ENCODE measurements at regions of chr7 and their contacts with region 1.

Region 1: GRCh38 chr7:122902751-122903495 is 16.7 kb upstream of the CADPS2 start:
- DNase-seq: no peak
- ATAC-seq: no peak
- H3K4me3 ChIP-seq: no peak overlapping the region
- H3K27ac ChIP-seq: no peak overlapping the region
- H3K4me1 ChIP-seq: no peaks in the 10 kb centered on the region
- H3K27me3 ChIP-seq: no peaks in the 10 kb centered on the region
- CTCF ChIP-seq: no peak

Region 2: DNA sequence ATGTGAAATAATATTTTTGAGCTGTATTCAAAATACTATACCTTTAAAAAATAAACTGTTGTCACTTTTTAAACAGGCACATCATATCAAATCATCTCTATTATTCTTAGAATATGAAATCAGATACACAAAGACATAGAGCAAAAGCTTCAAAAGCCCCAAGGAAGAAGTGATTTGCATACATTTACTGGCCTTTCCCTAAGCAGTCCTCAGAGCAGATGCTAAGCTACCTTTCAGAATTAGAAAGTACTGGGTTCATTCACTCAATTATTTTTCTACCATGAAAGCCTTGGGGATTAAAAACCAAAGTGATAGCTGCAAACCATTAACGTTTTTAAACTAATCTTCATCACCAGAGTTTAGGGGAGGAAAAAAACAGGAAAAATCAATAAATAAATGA is 144.4 kb before region 1 on chr7:
- intact Hi-C with region 1: no loop called
- DNase-seq: no peak
- ATAC-seq: no peak
- H3K4me3 ChIP-seq: no peak overlapping the region
- H3K27ac ChIP-seq: no peak overlapping the region
- H3K4me1 ChIP-seq: no peaks in the 10 kb centered on the region
- H3K27me3 ChIP-seq: no peaks in the 10 kb centered on the region
- CTCF ChIP-seq: no peak

Region 3: GRCh38 chr7:122770686-122771335 is 132.1 kb before region 1 on chr7:
- intact Hi-C with region 1: no loop called
- DNase-seq: no peak
- ATAC-seq: peak in 1 of 8 donors; percentile 28
- H3K4me3 ChIP-seq: no peak overlapping the region
- H3K27ac ChIP-seq: no peak overlapping the region
- H3K4me1 ChIP-seq: peaks cover 0 to 7% (median 0%) of the 10 kb centered on the region in 9 donors
- H3K27me3 ChIP-seq: no peaks in the 10 kb centered on the region
- CTCF ChIP-seq: no peak

Region 4: GRCh38 chr7:124422081-124422480 is 1519.2 kb after region 1 on chr7:
- intact Hi-C with region 1: loop called in 1 of 10 experiments (anchors 5 kb)
- DNase-seq: no peak
- ATAC-seq: no peak
- H3K4me3 ChIP-seq: no peak overlapping the region
- H3K27ac ChIP-seq: no peak overlapping the region
- H3K4me1 ChIP-seq: no peaks in the 10 kb centered on the region
- H3K27me3 ChIP-seq: no peaks in the 10 kb centered on the region
- CTCF ChIP-seq: no peak

Measured in heart right ventricle (tissue), 16 donors.